Endothelial cell of umbilical vein (primary cell): ENCODE measurements at regions of chr4 and their contacts with region 1.

Region 1: DNA sequence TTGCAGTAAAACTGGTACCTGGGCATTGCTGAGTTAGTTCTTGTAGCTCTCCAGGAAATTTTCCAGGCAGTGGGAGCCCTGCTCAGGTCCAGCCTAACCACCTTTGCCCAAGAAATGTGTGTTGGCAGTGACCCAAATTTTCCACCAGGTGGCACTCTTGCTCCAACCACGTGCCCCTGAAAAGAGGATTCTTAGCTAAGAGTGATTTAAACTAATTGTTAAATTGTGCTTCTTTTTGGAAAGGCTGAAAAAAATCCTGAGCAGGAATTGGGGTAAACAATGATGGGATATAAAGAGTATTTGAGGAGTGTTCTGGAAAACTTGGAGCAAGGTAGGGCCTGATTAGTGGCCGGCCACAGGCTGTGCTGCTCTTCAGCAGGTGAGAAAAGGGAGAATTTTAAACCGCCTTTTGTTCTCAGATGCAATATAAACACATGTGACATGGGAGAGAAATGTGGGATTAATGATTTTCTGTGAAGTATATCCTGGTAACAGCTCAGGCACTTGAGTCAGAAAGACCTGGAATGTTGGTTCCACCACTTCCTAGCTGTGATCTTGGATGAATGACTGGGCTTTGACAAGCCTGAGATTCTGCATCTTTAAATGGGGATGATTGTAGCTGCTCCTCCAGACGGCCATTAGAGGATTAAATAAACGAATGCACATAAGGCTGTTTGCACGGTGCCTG is 219.6 kb downstream of the PTTG2 start:
- DNase-seq: peak; percentile 77
- H3K4me3 ChIP-seq: no peak overlapping the region
- H3K27ac ChIP-seq: no peak overlapping the region
- H3K4me1 ChIP-seq: peaks cover 10% of the 10 kb centered on the region
- H3K27me3 ChIP-seq: no peaks in the 10 kb centered on the region
- CTCF ChIP-seq: peak; percentile 75 to 85
- POLR2A ChIP-seq: no peak

Region 2: GRCh38 chr4:38069271-38069760 is 110.5 kb before region 1 on chr4:
- CTCF ChIA-PET with region 1: interaction called, 66 read pairs
- POLR2A ChIA-PET with region 1: no interaction called
- dilution Hi-C with region 1: no loop called
- intact Hi-C with region 1: no loop called
- DNase-seq: peak; percentile 38
- H3K4me3 ChIP-seq: no peak overlapping the region
- H3K27ac ChIP-seq: no peak overlapping the region
- H3K4me1 ChIP-seq: peaks cover 10% of the 10 kb centered on the region
- H3K27me3 ChIP-seq: no peaks in the 10 kb centered on the region
- CTCF ChIP-seq: no peak
- POLR2A ChIP-seq: no peak

Region 3: DNA sequence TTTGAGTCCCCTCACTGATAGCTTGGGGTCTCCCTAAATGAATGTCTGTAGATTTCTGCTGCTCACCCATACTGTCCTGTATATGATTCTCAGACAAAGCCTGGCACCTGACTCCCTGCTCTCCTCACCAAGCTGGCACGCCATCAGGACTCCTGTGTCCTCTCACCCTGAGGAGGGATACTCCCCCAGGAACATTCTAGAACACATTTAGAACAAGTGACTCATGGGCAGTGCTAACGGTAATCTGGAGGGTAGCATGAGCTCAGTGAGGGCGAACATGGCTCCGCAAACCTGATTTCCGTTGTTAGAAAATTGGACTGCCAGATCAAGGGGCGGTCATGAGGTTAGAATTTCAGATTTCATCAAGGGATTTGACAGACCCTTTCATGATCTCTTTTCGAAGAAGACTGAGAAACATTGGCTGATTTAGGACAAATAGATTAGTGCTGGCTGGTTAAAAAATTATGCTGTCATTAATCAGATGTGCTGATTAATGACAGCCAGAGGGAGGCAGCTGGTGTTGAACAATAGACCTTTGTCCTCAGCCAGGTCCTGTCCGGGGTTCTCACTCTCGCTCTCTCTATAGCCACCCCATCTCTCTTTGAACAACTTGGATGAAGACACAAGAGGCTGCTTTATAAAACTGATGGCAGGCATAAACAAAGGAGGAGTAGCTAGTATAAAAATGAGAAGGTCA is 24.7 kb after region 1 on chr4:
- CTCF ChIA-PET with region 1: interaction called, 14 read pairs
- POLR2A ChIA-PET with region 1: no interaction called
- dilution Hi-C with region 1: no loop called
- intact Hi-C with region 1: no loop called
- DNase-seq: no peak
- H3K4me3 ChIP-seq: no peak overlapping the region
- H3K27ac ChIP-seq: no peak overlapping the region
- H3K4me1 ChIP-seq: no peaks in the 10 kb centered on the region
- H3K27me3 ChIP-seq: peaks cover 9 to 13% of the 10 kb centered on the region in 2 experiments
- CTCF ChIP-seq: no peak
- POLR2A ChIP-seq: no peak

Region 4: DNA sequence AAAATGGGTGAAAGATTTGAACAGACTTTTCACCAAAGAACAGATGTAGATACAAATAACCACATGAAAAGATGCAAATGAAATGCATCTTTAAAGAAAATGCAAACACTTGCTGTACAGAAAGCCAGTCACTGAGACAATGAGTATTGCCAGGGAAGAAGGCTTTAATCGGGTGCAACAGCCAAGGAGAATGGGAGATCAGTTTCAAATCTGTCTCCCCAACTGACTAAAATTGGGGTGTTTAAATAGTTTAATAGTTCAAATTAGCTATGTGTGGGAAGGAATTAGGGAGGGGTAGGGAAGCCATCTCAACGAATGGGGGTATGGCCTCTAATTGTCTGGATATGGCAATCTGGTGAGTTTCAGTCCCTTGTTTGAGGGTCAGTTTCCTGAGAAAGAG is 75.7 kb after region 1 on chr4:
- CTCF ChIA-PET with region 1: no interaction called
- POLR2A ChIA-PET with region 1: no interaction called
- dilution Hi-C with region 1: no loop called
- intact Hi-C with region 1: no loop called
- DNase-seq: no peak
- H3K4me3 ChIP-seq: no peak overlapping the region
- H3K27ac ChIP-seq: no peak overlapping the region
- H3K4me1 ChIP-seq: no peaks in the 10 kb centered on the region
- H3K27me3 ChIP-seq: peaks cover 3% of the 10 kb centered on the region in 2 experiments
- CTCF ChIP-seq: no peak
- POLR2A ChIP-seq: no peak

Region 5: GRCh38 chr4:38663801-38664705 is 484.2 kb after region 1 on chr4 and contains the start of gene KLF3:
- CTCF ChIA-PET with region 1: interaction called, 21 read pairs
- POLR2A ChIA-PET with region 1: no interaction called
- dilution Hi-C with region 1: no loop called
- intact Hi-C with region 1: no loop called
- DNase-seq: peak; percentile 86
- H3K4me3 ChIP-seq: peak within 1 kb of the TSS; percentile 81 to 89 (median 88)
- H3K27ac ChIP-seq: peak within 1 kb of the TSS; percentile 99
- H3K4me1 ChIP-seq: peaks cover 28% of the 10 kb centered on the region
- H3K27me3 ChIP-seq: no peaks in the 10 kb centered on the region
- CTCF ChIP-seq: no peak
- POLR2A ChIP-seq: peak; percentile 56
- total RNA-seq, gene KLF3: 50.5 and 51.8 TPM in 2 replicates

Region 6: DNA sequence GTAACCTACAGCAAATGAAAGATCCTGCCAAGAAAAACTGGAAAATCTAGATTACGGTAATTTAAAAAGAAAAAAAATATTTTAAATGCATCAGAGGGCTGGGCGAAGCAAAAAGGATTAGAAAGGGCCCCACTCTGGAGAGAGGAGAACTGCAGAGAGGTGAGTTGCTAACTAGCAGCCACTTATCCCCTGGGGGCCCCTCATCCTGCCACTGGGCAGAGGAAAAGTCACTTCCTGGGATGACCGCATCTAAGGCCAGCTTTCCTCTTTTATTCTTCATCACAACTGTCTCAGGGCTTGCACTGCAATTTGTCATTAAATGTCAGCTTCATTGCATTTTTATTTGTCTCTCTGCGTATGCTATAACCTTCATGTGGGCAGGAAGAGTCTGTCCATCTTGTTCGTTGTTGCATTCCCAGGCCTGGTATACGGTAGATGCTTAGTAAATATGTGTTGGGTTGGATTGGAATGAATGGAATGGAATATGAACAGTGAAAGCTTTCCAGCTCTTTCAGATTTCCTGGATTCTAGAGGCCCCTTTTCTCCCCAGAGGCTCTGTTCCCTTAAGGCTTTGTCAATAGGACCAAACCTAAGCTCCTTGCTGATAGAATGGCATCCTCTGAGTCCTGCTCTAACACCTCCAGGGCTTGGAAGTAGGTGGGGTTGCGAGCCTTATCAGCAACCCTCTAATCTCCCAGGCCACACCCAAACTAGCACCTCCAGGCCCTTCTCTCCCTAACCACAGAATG is 544.1 kb after region 1 on chr4:
- CTCF ChIA-PET with region 1: interaction called, 104 read pairs
- POLR2A ChIA-PET with region 1: no interaction called
- dilution Hi-C with region 1: no loop called
- intact Hi-C with region 1: no loop called
- DNase-seq: no peak
- H3K4me3 ChIP-seq: no peak overlapping the region
- H3K27ac ChIP-seq: no peak overlapping the region
- H3K4me1 ChIP-seq: peaks cover 7% of the 10 kb centered on the region
- H3K27me3 ChIP-seq: no peaks in the 10 kb centered on the region
- CTCF ChIP-seq: no peak
- POLR2A ChIP-seq: no peak

Region 7: DNA sequence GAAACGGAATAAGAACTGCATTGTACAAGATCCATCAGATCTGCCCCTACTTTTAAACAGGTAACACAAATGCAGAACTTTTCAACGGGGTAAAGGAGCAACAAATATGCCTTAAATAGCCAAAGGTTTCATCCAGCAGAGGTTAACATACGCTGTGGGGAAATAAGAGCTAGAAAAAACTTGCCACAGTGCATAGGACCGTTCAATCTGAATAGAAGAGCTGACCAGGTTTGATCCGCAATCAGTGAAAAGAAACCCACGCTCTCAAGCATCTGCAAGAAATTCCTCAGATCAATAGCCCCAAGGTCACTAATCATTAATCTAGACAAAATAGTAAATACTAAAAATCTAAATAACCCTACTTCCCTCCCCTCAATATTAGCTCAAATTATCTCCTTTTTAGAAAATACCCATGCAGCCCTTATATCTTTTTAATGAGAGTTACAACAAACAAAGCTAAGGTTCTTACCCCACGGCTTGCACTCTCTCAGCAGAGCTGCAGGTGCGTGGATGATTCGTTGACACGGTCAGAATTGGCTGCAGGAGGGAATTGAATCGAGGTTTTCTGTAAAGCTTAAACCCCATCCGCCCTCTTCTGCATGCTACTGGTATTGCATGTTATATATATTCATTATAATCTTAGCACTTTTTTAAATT is 602.7 kb after region 1 on chr4 and contains the start of gene TLR10:
- CTCF ChIA-PET with region 1: interaction called, 58 read pairs
- POLR2A ChIA-PET with region 1: no interaction called
- dilution Hi-C with region 1: no loop called
- intact Hi-C with region 1: loop called (anchors 2 kb)
- DNase-seq: peak; percentile 56
- H3K4me3 ChIP-seq: no peak within 1 kb of the TSS
- H3K27ac ChIP-seq: no peak within 1 kb of the TSS
- H3K4me1 ChIP-seq: no peaks in the 10 kb centered on the region
- H3K27me3 ChIP-seq: peaks cover 0 to 2% of the 10 kb centered on the region in 2 experiments
- CTCF ChIP-seq: peak; percentile 38 to 55
- POLR2A ChIP-seq: no peak
- total RNA-seq, gene TLR10: not detected in 2 replicates